Calu3 (cell line): ENCODE measurements at regions of chr3 and their contacts with region 1.

Region 1: DNA sequence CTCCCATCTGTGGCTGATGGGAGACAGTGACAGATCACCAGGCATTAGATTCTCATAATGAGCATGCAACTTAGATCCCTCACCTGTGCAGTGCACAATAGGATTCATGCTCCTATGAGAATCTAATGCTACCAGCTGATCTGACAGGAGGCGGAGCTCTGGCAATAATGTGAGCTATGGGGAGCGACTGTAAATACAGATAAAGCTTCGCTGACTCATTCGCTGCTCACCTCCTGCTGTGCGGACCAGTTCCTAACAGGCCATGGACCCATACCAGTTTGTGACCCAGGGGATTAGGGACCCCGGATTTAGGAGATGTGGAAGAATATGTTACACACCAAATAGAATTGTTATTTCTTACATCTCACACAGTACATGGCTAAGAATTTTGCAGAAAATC is 6.7 kb downstream of the ARGFX start:
- DNase-seq: peak; percentile 66
- H3K4me3 Mint-ChIP-seq: no peak overlapping the region
- H3K27ac Mint-ChIP-seq: no peak overlapping the region
- H3K4me1 Mint-ChIP-seq: no peaks in the 10 kb centered on the region
- H3K27me3 Mint-ChIP-seq: no peaks in the 10 kb centered on the region
- CTCF ChIP-seq: no peak

Region 2: GRCh38 chr3:121529308-121529707 is 45.1 kb before region 1 on chr3:
- CTCF ChIA-PET with region 1: no interaction called
- intact Hi-C with region 1: no loop called
- DNase-seq: no peak
- H3K4me3 Mint-ChIP-seq: no peak overlapping the region
- H3K27ac Mint-ChIP-seq: no peak overlapping the region
- H3K4me1 Mint-ChIP-seq: no peaks in the 10 kb centered on the region
- H3K27me3 Mint-ChIP-seq: no peaks in the 10 kb centered on the region
- CTCF ChIP-seq: no peak

Region 3: GRCh38 chr3:121606106-121606505 is 31.7 kb after region 1 on chr3:
- CTCF ChIA-PET with region 1: no interaction called
- intact Hi-C with region 1: no loop called
- DNase-seq: no peak
- H3K4me3 Mint-ChIP-seq: no peak overlapping the region
- H3K27ac Mint-ChIP-seq: no peak overlapping the region
- H3K4me1 Mint-ChIP-seq: no peaks in the 10 kb centered on the region
- H3K27me3 Mint-ChIP-seq: no peaks in the 10 kb centered on the region
- CTCF ChIP-seq: no peak

Region 4: GRCh38 chr3:121619691-121620090 is 45.2 kb after region 1 on chr3:
- CTCF ChIA-PET with region 1: interaction called, 13 read pairs
- intact Hi-C with region 1: no loop called
- DNase-seq: no peak
- H3K4me3 Mint-ChIP-seq: no peak overlapping the region
- H3K27ac Mint-ChIP-seq: no peak overlapping the region
- H3K4me1 Mint-ChIP-seq: no peaks in the 10 kb centered on the region
- H3K27me3 Mint-ChIP-seq: peaks cover 27% of the 10 kb centered on the region
- CTCF ChIP-seq: no peak